Endothelial cell of umbilical vein (primary cell): ENCODE measurements at regions of chr4 and their contacts with region 1.

Region 1: DNA sequence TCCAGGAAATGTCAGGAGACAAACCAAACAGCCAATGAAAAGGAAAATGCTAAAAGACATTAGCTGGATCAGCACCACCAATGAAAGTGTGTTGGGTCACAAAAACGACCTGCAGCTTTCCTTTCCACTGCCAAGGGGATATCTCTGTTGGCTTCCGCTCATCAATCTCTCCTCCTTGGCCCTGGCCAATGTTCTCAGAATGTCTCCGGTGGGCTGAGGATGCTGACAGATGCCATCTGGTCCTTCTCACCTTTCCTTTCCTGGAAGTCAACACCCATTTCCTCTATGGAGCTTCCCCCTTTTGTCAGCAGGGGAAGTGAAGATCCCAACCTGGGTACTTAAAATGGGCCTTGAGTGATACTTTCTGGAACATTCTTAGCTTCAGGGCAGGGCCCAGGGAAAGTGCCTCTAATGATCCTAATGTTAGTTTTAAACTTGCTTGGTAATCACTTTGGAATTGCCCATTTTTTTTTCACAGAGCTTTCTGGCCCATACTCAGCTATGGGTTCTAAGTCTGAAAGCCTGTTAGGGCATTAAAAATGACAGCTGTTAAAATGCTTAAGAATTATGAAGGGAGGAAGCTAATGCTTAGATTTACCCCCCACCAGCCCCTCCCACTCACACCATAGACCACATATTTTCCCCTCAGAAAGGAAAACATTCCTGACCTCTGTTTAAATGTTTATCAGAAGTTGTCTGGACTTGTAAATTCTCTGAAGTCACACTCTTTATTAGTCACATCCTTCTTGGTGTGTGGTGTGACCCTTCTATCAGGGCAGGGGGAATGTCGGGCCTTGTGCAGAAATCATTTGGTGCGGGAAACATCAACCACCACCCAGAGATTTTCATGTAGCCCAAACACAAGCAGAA is 29.2 kb downstream of the IGFBP7 start:
- DNase-seq: peak; percentile 99
- H3K4me3 ChIP-seq: no peak overlapping the region
- H3K27ac ChIP-seq: peak overlapping the region; percentile 100
- H3K4me1 ChIP-seq: peaks cover 81% of the 10 kb centered on the region
- H3K27me3 ChIP-seq: no peaks in the 10 kb centered on the region
- CTCF ChIP-seq: no peak
- POLR2A ChIP-seq: peak; percentile 25

Region 2: GRCh38 chr4:56977321-56978012 is 103.5 kb before region 1 on chr4 and contains the start of gene NOA1:
- CTCF ChIA-PET with region 1: interaction called, 3 read pairs
- POLR2A ChIA-PET with region 1: interaction called, 5 read pairs
- dilution Hi-C with region 1: no loop called
- intact Hi-C with region 1: loop called (anchors 2 kb)
- DNase-seq: peak; percentile 100
- H3K4me3 ChIP-seq: peak within 1 kb of the TSS; percentile 80 to 93 (median 88)
- H3K27ac ChIP-seq: peak within 1 kb of the TSS; percentile 100
- H3K4me1 ChIP-seq: peaks cover 30% of the 10 kb centered on the region
- H3K27me3 ChIP-seq: no peaks in the 10 kb centered on the region
- CTCF ChIP-seq: no peak
- POLR2A ChIP-seq: peak; percentile 76
- total RNA-seq, gene NOA1: 16.1 and 17.1 TPM in 2 replicates

Region 3: GRCh38 chr4:57064811-57065711 is 16.0 kb before region 1 on chr4:
- CTCF ChIA-PET with region 1: interaction called, 13 read pairs
- POLR2A ChIA-PET with region 1: no interaction called
- dilution Hi-C with region 1: no loop called
- intact Hi-C with region 1: loop called (anchors 2 kb)
- DNase-seq: peak; percentile 87
- H3K4me3 ChIP-seq: peak overlapping the region in 1 of 3 experiments; percentile 15
- H3K27ac ChIP-seq: peak overlapping the region; percentile 65
- H3K4me1 ChIP-seq: peaks cover 33% of the 10 kb centered on the region
- H3K27me3 ChIP-seq: no peaks in the 10 kb centered on the region
- CTCF ChIP-seq: no peak
- POLR2A ChIP-seq: no peak

Region 4: GRCh38 chr4:57102050-57102624 is 21.1 kb after region 1 on chr4:
- CTCF ChIA-PET with region 1: interaction called, 20 read pairs
- POLR2A ChIA-PET with region 1: interaction called, 19 read pairs
- dilution Hi-C with region 1: no loop called
- intact Hi-C with region 1: loop called (anchors 1 kb)
- DNase-seq: peak; percentile 94
- H3K4me3 ChIP-seq: no peak overlapping the region
- H3K27ac ChIP-seq: peak overlapping the region; percentile 75
- H3K4me1 ChIP-seq: peaks cover 45% of the 10 kb centered on the region
- H3K27me3 ChIP-seq: no peaks in the 10 kb centered on the region
- CTCF ChIP-seq: no peak
- POLR2A ChIP-seq: no peak

Region 5: GRCh38 chr4:57136281-57136680 is 55.3 kb after region 1 on chr4:
- CTCF ChIA-PET with region 1: no interaction called
- POLR2A ChIA-PET with region 1: no interaction called
- dilution Hi-C with region 1: no loop called
- intact Hi-C with region 1: loop called (anchors 2 kb)
- DNase-seq: peak; percentile 65
- H3K4me3 ChIP-seq: no peak overlapping the region
- H3K27ac ChIP-seq: peak overlapping the region; percentile 71
- H3K4me1 ChIP-seq: peaks cover 14% of the 10 kb centered on the region
- H3K27me3 ChIP-seq: no peaks in the 10 kb centered on the region
- CTCF ChIP-seq: no peak
- POLR2A ChIP-seq: peak; percentile 48